Activated CD4-positive, alpha-beta T cell treated with anti-CD3 and anti-CD28 coated beads, Interleukin-2, amount 10 ng/mL, durations not matched to agents 24 days and 14 days (primary cell): ENCODE measurements at regions of chr1 and their contacts with region 1.

Region 1: GRCh38 chr1:226736908-226737818 is 1.9 kb downstream of the ITPKB start:
- DNase-seq: peak; percentile 86
- H3K4me3 Mint-ChIP-seq: peak overlapping the region; percentile 84
- H3K27ac Mint-ChIP-seq: peak overlapping the region; percentile 94
- H3K4me1 Mint-ChIP-seq: peaks cover 45% of the 10 kb centered on the region
- H3K27me3 Mint-ChIP-seq: no peaks in the 10 kb centered on the region

Region 2: GRCh38 chr1:226547754-226548191 is 189.4 kb before region 1 on chr1:
- intact Hi-C with region 1: loop called (anchors 10 kb)
- DNase-seq: peak; percentile 82
- H3K4me3 Mint-ChIP-seq: no peak overlapping the region
- H3K27ac Mint-ChIP-seq: no peak overlapping the region
- H3K4me1 Mint-ChIP-seq: peaks cover 9% of the 10 kb centered on the region
- H3K27me3 Mint-ChIP-seq: peaks cover 63% of the 10 kb centered on the region

Region 3: GRCh38 chr1:226662642-226663326 is 74.4 kb before region 1 on chr1:
- intact Hi-C with region 1: loop called (anchors 1 kb)
- DNase-seq: peak; percentile 92
- H3K4me3 Mint-ChIP-seq: peak overlapping the region; percentile 69
- H3K27ac Mint-ChIP-seq: peak overlapping the region; percentile 81
- H3K4me1 Mint-ChIP-seq: peaks cover 79% of the 10 kb centered on the region
- H3K27me3 Mint-ChIP-seq: no peaks in the 10 kb centered on the region

Region 4: DNA sequence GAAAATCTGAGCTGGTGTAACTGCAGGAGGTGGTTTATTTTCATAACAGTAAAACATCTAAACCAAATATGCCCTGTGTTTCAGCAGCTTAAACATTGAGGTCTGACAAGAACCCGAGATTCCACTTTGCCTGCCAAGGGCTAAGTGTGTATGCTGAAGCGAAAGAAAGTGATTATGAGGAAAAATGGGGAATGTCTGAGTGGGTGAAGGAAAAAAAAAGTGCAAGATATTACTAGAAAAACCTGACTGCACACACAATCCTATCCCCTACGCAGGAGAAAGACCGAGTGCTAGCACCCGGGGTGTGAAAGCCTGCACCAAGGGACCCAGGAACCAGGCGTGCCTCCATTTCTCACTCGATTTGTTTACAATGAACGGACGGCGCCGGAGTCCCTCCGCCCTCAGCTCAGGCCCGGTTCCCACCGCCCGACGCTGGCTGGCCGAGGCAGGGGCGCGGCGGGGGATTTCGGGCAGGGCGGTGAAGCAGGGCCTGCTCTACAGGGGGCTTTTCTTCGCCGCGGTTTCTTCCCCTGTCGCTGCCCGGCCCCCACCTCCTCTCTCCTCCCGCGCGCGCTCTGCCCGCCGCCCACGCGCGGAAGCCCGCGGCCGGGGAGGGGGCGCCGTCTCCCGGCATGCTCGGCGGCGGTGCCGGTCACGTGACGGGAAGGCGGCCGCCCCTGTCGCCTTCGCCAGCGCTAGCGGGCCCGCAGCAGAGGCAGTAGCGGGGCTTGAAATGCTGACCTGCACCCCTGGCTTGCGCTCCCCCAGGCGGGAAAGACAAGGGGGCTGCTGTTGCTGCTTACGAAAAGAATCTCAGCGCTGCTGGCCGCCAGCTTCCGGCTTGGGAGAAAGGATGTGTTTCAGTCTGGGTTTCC is 34.0 kb before region 1 on chr1:
- intact Hi-C with region 1: loop called (anchors 1 kb)
- DNase-seq: peak; percentile 96
- H3K4me3 Mint-ChIP-seq: peak overlapping the region; percentile 86
- H3K27ac Mint-ChIP-seq: peak overlapping the region; percentile 92
- H3K4me1 Mint-ChIP-seq: peaks cover 48% of the 10 kb centered on the region
- H3K27me3 Mint-ChIP-seq: no peaks in the 10 kb centered on the region

Region 5: DNA sequence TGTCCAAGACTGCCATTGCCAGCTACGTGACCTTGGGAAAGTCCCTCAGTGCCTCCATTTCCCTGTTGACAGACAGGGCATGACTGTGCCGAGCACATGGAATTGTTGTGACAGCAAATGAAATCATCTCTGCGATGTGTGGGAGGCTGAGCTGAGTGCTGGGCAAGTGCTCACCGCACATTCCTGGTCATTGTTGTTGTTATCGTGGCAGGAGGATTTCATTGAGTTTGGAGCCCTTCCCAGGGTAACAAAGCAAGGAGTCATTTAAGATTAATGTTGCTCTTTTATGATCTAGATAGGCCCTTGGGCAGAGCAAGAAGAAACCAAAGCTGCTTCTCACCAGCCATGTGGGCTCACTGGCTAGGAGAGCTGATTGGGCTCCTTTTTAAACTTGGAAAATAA is 41.5 kb after region 1 on chr1:
- intact Hi-C with region 1: no loop called
- DNase-seq: no peak
- H3K4me3 Mint-ChIP-seq: no peak overlapping the region
- H3K27ac Mint-ChIP-seq: no peak overlapping the region
- H3K4me1 Mint-ChIP-seq: no peaks in the 10 kb centered on the region
- H3K27me3 Mint-ChIP-seq: peaks cover 7% of the 10 kb centered on the region

Region 6: GRCh38 chr1:226827968-226828513 is 90.9 kb after region 1 on chr1:
- intact Hi-C with region 1: loop called (anchors 1 kb)
- DNase-seq: peak; percentile 98
- H3K4me3 Mint-ChIP-seq: peak overlapping the region; percentile 63
- H3K27ac Mint-ChIP-seq: peak overlapping the region; percentile 92
- H3K4me1 Mint-ChIP-seq: peaks cover 20% of the 10 kb centered on the region
- H3K27me3 Mint-ChIP-seq: no peaks in the 10 kb centered on the region

Region 7: GRCh38 chr1:227049253-227049652 is 312.1 kb after region 1 on chr1:
- intact Hi-C with region 1: no loop called
- DNase-seq: no peak
- H3K4me3 Mint-ChIP-seq: no peak overlapping the region
- H3K27ac Mint-ChIP-seq: no peak overlapping the region
- H3K4me1 Mint-ChIP-seq: no peaks in the 10 kb centered on the region
- H3K27me3 Mint-ChIP-seq: peaks cover 19% of the 10 kb centered on the region